Dendritic cell treated with granulocyte-macrophage colony-stimulating factor and Interleukin-4, amounts not matched to agents 40 ng/mL and 50 ng/mL, for 4 days (primary cell): ENCODE measurements at regions of chr5 and their contacts with region 1.

Region 1: GRCh38 chr5:74684900-74685851 is at the start of gene HEXB:
- H3K4me3 Mint-ChIP-seq: peak within 1 kb of the TSS; percentile 83
- H3K27ac Mint-ChIP-seq: peak within 1 kb of the TSS; percentile 89
- H3K4me1 Mint-ChIP-seq: peaks cover 37% of the 10 kb centered on the region
- H3K27me3 Mint-ChIP-seq: peaks cover 16% of the 10 kb centered on the region

Region 2: GRCh38 chr5:74442466-74442865 is 242.7 kb before region 1 on chr5:
- intact Hi-C with region 1: no loop called
- H3K4me3 Mint-ChIP-seq: no peak overlapping the region
- H3K27ac Mint-ChIP-seq: no peak overlapping the region
- H3K4me1 Mint-ChIP-seq: peaks cover 17% of the 10 kb centered on the region
- H3K27me3 Mint-ChIP-seq: no peaks in the 10 kb centered on the region

Region 3: DNA sequence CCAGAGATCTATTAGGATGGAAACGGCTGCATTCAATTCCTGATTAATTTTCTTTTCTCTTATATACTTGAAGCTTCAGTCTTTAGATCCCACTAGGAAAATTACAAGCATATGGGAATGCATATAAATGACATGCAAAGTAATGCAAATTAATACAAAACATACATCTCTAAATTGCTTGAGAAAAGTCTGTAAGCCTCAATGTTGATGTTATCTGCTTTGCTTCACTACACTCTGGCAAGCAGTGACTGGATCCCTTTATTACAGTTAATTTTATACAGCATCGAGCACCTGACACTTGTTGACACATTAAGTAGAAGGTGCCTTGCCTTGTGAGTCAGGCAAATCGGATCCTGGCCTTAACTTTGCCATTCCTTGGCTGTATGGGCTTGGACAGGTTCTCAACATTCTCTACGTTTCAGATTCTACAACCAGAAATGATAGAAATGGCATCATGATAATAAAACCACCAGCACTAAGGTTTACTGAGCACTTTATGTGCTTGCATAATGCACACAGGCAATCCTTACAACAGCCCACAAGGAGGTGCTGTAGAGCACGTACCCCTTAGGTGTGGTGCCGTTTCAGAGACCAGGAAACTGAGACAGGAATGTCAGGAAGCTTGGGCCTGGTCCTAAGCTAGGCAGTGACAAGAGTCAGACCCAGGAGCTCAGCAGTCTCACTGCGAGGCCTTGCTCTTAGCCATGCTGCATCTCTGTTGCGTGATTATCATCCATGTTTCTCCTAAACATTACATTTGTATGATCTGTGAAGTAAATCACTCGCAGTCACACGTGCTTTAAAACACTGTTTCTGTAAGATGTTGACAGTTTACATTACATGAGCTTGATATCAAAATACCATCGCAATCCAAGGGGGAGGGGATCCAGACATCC is 364.5 kb after region 1 on chr5:
- intact Hi-C with region 1: loop called (anchors 10 kb)
- H3K4me3 Mint-ChIP-seq: no peak overlapping the region
- H3K27ac Mint-ChIP-seq: no peak overlapping the region
- H3K4me1 Mint-ChIP-seq: peaks cover 10% of the 10 kb centered on the region
- H3K27me3 Mint-ChIP-seq: peaks cover 44% of the 10 kb centered on the region